H1 (cell line): ENCODE measurements at regions of chr1 and their contacts with region 1.

Region 1: GRCh38 chr1:21200767-21201166 is 24.1 kb upstream of the EIF4G3 start:
- DNase-seq: no peak
- H3K4me3 ChIP-seq: no peak overlapping the region
- H3K27ac ChIP-seq: no peak overlapping the region
- H3K4me1 ChIP-seq: no peaks in the 10 kb centered on the region
- H3K27me3 ChIP-seq: peaks cover 0 to 4% (median 3%) of the 10 kb centered on the region in 4 experiments; a peak in 4 of 7 replicates
- CTCF ChIP-seq: no peak
- EP300 ChIP-seq: no peak
- POLR2A ChIP-seq: no peak
- RAD21 ChIP-seq: no peak

Region 2: GRCh38 chr1:20949871-20950590 is 250.7 kb before region 1 on chr1:
- CTCF ChIA-PET with region 1: no interaction called
- POLR2A ChIA-PET with region 1: no interaction called
- DNase-seq: no peak
- H3K4me3 ChIP-seq: no peak overlapping the region
- H3K27ac ChIP-seq: no peak overlapping the region
- H3K4me1 ChIP-seq: peaks cover 0 to 3% (median 0%) of the 10 kb centered on the region in 4 experiments; a peak in 2 of 7 replicates
- H3K27me3 ChIP-seq: no peaks in the 10 kb centered on the region
- CTCF ChIP-seq: no peak
- EP300 ChIP-seq: no peak
- POLR2A ChIP-seq: no peak
- RAD21 ChIP-seq: no peak

Region 3: DNA sequence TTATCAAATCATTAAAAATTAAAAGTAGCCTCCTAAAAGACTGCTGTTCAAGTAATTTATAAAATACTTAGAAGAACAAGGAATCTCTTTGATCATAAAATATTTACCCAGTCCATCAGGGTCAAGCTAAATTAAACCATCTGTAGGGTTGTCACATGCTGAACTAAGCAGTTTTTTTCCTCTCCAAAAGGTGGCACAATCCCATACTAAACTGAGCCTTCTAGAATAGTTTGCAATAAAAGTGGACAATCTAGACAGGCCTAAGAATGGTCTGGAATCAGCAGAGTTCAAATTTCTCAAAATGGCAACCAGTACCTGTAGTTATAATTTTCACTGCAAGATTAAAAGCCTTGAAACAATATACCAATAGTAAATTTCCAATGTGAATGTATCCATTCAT is 218.9 kb before region 1 on chr1:
- CTCF ChIA-PET with region 1: interaction called, 17 read pairs
- POLR2A ChIA-PET with region 1: no interaction called
- DNase-seq: no peak
- H3K4me3 ChIP-seq: no peak overlapping the region
- H3K27ac ChIP-seq: no peak overlapping the region
- H3K4me1 ChIP-seq: no peaks in the 10 kb centered on the region
- H3K27me3 ChIP-seq: peaks cover 0 to 1% (median 0%) of the 10 kb centered on the region in 4 experiments; a peak in 1 of 7 replicates
- CTCF ChIP-seq: no peak
- EP300 ChIP-seq: no peak
- POLR2A ChIP-seq: no peak
- RAD21 ChIP-seq: peak in 1 of 2 experiments; percentile 21; a peak in 1 of 4 replicates

Region 4: GRCh38 chr1:20987831-20988825 is 212.6 kb before region 1 on chr1:
- CTCF ChIA-PET with region 1: interaction called, 17 read pairs
- POLR2A ChIA-PET with region 1: no interaction called
- DNase-seq: no peak
- H3K4me3 ChIP-seq: no peak overlapping the region
- H3K27ac ChIP-seq: no peak overlapping the region
- H3K4me1 ChIP-seq: no peaks in the 10 kb centered on the region
- H3K27me3 ChIP-seq: no peaks in the 10 kb centered on the region
- CTCF ChIP-seq: no peak
- EP300 ChIP-seq: no peak
- POLR2A ChIP-seq: no peak
- RAD21 ChIP-seq: no peak

Region 5: DNA sequence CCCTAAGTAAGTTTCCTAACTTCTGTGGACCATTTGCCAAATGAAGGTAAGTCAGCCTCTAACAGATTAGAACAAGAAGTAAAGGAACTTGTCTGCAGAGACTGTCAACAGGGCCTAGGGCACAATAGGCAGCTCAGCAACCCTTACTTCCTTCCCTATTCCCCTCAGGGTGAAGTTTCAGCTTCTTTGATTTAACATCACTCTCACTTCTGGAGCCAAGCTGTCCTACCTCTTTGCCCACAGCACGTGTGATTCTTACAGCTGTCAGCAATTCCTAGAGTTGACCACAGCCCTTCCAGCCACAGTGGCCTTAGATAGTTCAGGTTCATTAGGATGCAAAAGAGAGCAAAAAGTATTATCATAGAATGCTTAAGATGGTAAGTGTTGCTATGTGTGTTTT is 16.5 kb before region 1 on chr1:
- CTCF ChIA-PET with region 1: interaction called, 35 read pairs
- POLR2A ChIA-PET with region 1: no interaction called
- DNase-seq: no peak
- H3K4me3 ChIP-seq: no peak overlapping the region
- H3K27ac ChIP-seq: no peak overlapping the region
- H3K4me1 ChIP-seq: no peaks in the 10 kb centered on the region
- H3K27me3 ChIP-seq: peaks cover 28 to 59% (median 52%) of the 10 kb centered on the region in 4 experiments
- CTCF ChIP-seq: no peak
- EP300 ChIP-seq: no peak
- POLR2A ChIP-seq: no peak
- RAD21 ChIP-seq: no peak

Region 6: DNA sequence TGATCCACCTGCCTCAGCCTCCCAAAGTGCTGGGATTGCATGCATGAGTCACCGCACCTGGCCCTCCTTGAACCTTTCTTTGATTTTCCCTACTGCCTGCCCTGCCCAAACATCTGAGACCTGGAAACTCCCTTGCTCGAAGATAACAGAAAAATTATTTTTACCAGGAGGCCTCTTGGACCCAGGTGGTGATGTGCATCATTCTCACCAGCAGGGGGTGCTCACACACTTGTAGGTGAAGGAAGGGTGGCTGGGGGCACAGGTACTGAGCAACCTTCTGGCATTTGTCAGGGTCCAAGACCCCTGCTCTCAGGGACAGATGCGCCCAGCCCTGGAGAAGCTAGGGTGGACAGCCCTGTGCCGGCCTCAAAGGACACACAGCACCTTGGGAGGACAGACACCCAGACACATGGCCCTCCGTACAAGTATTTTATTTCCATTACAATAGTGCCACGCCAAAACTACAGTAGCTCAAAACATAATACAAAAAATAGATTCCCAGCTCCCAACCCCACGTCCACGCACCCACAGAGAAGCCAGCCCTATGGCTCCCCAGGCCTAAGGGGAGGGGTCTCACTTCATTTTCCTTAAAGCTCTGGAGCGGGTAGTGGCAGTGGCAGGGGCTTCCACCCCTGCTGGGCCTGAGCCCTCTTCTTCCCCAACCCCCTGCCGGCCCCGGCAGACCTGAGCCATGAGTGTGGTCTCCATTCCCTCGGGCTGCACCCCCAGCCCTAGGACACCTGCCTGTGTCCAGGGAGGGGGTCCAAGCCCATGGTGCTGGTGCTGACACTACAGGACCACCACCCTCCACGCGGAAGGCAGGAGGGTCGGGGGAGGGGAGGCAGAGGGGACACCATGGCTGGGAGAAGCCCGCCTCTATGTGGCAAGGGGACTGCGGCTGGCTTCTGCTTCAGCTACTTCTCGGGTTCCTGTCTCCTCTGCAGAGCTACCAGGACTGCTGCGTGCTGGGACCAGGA is 16.4 kb after region 1 on chr1:
- CTCF ChIA-PET with region 1: interaction called, 16 read pairs
- POLR2A ChIA-PET with region 1: no interaction called
- DNase-seq: peak in 1 of 2 experiments; percentile 88
- H3K4me3 ChIP-seq: no peak overlapping the region
- H3K27ac ChIP-seq: no peak overlapping the region
- H3K4me1 ChIP-seq: peaks cover 0 to 5% (median 5%) of the 10 kb centered on the region in 4 experiments; a peak in 5 of 7 replicates
- H3K27me3 ChIP-seq: no peaks in the 10 kb centered on the region
- CTCF ChIP-seq: peak; percentile 60 to 86 (median 80)
- EP300 ChIP-seq: no peak
- POLR2A ChIP-seq: no peak
- RAD21 ChIP-seq: peak; percentile 43 to 67; a peak in 3 of 4 replicates

Region 7: GRCh38 chr1:21334214-21335087 is 133.7 kb after region 1 on chr1:
- CTCF ChIA-PET with region 1: no interaction called
- POLR2A ChIA-PET with region 1: no interaction called
- DNase-seq: peak in 1 of 2 experiments; percentile 89
- H3K4me3 ChIP-seq: peak overlapping the region in 3 of 4 experiments; percentile 19 to 45 (median 29); a peak in 6 of 8 replicates
- H3K27ac ChIP-seq: no peak overlapping the region
- H3K4me1 ChIP-seq: peaks cover 10 to 31% (median 20%) of the 10 kb centered on the region in 4 experiments
- H3K27me3 ChIP-seq: no peaks in the 10 kb centered on the region; a peak in 1 of 7 replicates
- CTCF ChIP-seq: peak; percentile 90 to 96 (median 93)
- EP300 ChIP-seq: no peak
- POLR2A ChIP-seq: no peak
- RAD21 ChIP-seq: peak; percentile 75 to 86